A673 (cell line): ENCODE measurements at regions of chr9 and their contacts with region 1.

Region 1: DNA sequence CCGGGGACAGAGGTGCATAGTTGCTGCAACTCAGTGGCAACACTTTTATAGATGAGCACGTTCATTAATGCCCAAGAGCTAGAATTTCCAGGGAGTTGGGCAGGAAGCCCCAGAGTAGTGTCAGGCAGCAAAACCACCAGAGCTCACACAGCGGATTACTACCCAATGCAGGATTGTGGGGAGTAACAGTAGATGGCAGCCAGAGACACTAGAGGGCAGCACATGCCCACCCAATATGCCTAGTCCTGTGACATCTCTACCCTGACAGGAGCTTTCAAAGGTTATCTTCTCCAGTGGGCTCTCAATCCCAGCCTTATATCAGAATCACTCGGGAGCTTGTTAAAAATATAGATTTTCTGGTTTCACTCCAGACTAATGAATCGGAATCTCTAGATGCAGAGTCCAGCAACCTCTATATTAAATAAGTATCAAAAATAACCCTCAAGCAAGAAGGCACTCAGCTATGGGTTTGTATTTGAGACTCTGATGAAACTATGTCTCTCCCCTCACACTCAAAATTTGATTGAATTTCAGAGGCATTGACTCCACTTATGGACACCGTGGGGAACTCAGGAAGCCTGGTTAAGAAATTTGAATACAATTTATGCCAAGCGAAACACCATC is 58.4 kb upstream of the PHF24 start:
- DNase-seq: peak; percentile 85
- H3K4me3 ChIP-seq: no peak overlapping the region
- H3K27ac ChIP-seq: no peak overlapping the region
- H3K4me1 ChIP-seq: no peaks in the 10 kb centered on the region
- H3K27me3 ChIP-seq: peaks cover 42% of the 10 kb centered on the region
- CTCF ChIP-seq: peak; percentile 84

Region 2: GRCh38 chr9:34929506-34930102 is 30.0 kb after region 1 on chr9:
- CTCF ChIA-PET with region 1: interaction called, 11 read pairs
- POLR2A ChIA-PET with region 1: no interaction called
- intact Hi-C with region 1: no loop called
- DNase-seq: peak; percentile 52
- H3K4me3 ChIP-seq: no peak overlapping the region
- H3K27ac ChIP-seq: no peak overlapping the region
- H3K4me1 ChIP-seq: no peaks in the 10 kb centered on the region
- H3K27me3 ChIP-seq: no peaks in the 10 kb centered on the region
- CTCF ChIP-seq: peak; percentile 89

Region 3: DNA sequence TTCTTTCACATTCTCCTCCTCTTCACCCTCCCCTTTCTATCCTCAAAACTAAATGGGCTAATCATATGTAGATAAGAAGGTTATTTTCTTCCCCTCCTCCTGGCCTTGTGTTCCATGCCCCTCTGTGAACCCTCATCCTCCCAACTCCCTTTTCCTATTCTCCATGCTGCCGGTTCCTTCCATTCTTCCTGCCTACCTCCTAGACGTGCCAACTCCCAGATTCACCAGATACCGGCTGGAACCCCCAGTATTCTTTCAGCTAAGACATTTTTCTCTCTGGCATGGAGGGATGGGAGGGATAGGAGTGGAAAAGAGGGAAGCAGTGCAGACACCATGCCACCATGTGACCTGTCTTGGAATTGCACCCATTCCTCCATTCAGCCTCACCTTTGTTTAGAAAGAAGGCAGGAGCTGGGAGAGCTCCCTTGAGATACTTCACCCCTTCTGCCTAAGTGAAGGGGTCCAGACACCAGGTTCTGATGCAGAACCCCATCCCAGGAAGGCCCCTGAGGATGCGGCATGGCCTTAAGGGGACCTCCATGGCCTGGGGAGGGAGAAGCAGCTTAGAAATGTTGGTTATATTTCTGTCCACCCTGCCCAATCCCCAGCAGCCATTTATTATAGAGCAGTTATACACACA is 94.7 kb after region 1 on chr9:
- CTCF ChIA-PET with region 1: interaction called, 39 read pairs
- POLR2A ChIA-PET with region 1: no interaction called
- intact Hi-C with region 1: loop called (anchors 2 kb)
- DNase-seq: peak; percentile 72
- H3K4me3 ChIP-seq: no peak overlapping the region
- H3K27ac ChIP-seq: peak overlapping the region; percentile 62
- H3K4me1 ChIP-seq: peaks cover 33% of the 10 kb centered on the region
- H3K27me3 ChIP-seq: no peaks in the 10 kb centered on the region
- CTCF ChIP-seq: peak; percentile 76

Region 4: GRCh38 chr9:35071814-35072460 is 172.3 kb after region 1 on chr9:
- CTCF ChIA-PET with region 1: no interaction called
- POLR2A ChIA-PET with region 1: interaction called, 11 read pairs
- intact Hi-C with region 1: no loop called
- DNase-seq: peak; percentile 81
- H3K4me3 ChIP-seq: peak overlapping the region; percentile 98
- H3K27ac ChIP-seq: peak overlapping the region; percentile 100
- H3K4me1 ChIP-seq: peaks cover 6% of the 10 kb centered on the region
- H3K27me3 ChIP-seq: no peaks in the 10 kb centered on the region
- CTCF ChIP-seq: 0 out of 2 replicates have a peak, but pooled peaks have one; percentile 9

Region 5: DNA sequence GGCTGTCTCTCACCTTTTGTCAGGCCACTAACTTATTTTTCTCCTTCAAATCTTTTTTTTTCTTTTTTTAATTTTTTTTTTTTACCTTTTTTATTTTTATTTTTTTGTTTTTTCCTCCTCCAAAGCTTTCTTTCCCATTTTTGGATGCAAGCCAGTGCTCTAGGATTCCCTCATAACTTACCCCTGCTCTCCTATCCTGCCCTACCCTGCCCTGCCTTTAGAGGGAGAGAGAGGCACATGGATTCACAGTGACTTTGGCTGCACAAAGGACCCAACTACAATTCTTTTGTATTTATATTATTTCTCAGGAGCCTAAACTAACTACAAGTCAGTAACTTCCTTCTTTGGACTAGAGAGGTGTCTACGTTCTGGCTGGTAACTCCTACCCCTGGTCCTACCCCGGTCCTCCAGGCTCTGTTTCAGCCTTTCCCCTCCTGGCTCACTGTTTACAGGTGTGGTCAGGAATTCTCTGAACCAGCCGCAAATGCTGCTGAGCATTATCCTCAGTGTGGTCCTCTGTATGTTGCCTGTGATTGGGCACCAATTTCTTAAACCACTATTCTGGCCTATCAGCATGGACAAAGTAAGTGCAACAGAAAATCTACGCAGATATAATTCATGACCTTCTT is 581.8 kb after region 1 on chr9:
- CTCF ChIA-PET with region 1: interaction called, 4 read pairs
- POLR2A ChIA-PET with region 1: no interaction called
- intact Hi-C with region 1: loop called (anchors 5 kb)
- DNase-seq: peak; percentile 73
- H3K4me3 ChIP-seq: no peak overlapping the region
- H3K27ac ChIP-seq: no peak overlapping the region
- H3K4me1 ChIP-seq: peaks cover under 1% of the 10 kb centered on the region
- H3K27me3 ChIP-seq: no peaks in the 10 kb centered on the region
- CTCF ChIP-seq: peak; percentile 70